ENCODE measurements at regions of chr1 and their contacts with region 1.

Region 1: DNA sequence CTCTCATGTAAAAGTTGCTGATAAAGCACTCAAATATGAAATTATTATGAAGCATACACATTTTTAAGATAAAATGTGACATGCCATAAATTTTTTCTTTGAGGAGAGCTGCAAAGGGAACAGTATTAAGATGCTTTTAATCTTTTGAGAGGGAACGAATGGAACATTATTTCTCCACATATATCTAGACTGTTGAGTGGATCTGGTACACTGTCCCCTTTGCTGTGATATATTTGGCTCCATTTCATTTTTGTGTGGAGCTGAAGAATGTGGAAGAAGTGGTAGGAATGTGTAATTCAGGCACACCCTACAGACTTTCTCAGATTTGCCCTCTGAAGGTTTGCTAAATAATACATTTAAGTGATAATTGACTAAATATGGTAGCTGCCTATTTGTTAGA is 31.7 kb downstream of the PGM1 start:
- DNase-seq: no peak
- H3K4me3 ChIP-seq: no peak overlapping the region
- H3K27ac ChIP-seq: peak overlapping the region; percentile 72
- H3K4me1 ChIP-seq: peaks cover 67% of the 10 kb centered on the region
- H3K27me3 ChIP-seq: no peaks in the 10 kb centered on the region
- CTCF ChIP-seq: peak; percentile 36

Region 2: GRCh38 chr1:63821091-63822005 is 196.4 kb after region 1 on chr1:
- intact Hi-C with region 1: no loop called
- DNase-seq: no peak
- H3K4me3 ChIP-seq: no peak overlapping the region
- H3K27ac ChIP-seq: no peak overlapping the region
- H3K4me1 ChIP-seq: peaks cover 40% of the 10 kb centered on the region
- H3K27me3 ChIP-seq: no peaks in the 10 kb centered on the region
- CTCF ChIP-seq: no peak

Region 3: GRCh38 chr1:63935143-63935542 is 310.2 kb after region 1 on chr1:
- intact Hi-C with region 1: no loop called
- DNase-seq: no peak
- H3K4me3 ChIP-seq: no peak overlapping the region
- H3K27ac ChIP-seq: peak overlapping the region; percentile 30
- H3K4me1 ChIP-seq: peaks cover 36% of the 10 kb centered on the region
- H3K27me3 ChIP-seq: no peaks in the 10 kb centered on the region
- CTCF ChIP-seq: peak; percentile 48

Region 4: GRCh38 chr1:64136752-64137411 is 512.0 kb after region 1 on chr1:
- intact Hi-C with region 1: loop called (anchors 10 kb)
- DNase-seq: peak; percentile 64
- H3K4me3 ChIP-seq: no peak overlapping the region
- H3K27ac ChIP-seq: no peak overlapping the region
- H3K4me1 ChIP-seq: no peaks in the 10 kb centered on the region
- H3K27me3 ChIP-seq: no peaks in the 10 kb centered on the region
- CTCF ChIP-seq: peak; percentile 92

Region 5: GRCh38 chr1:64242895-64243756 is 618.2 kb after region 1 on chr1:
- intact Hi-C with region 1: loop called (anchors 5 kb)
- DNase-seq: no peak
- H3K4me3 ChIP-seq: no peak overlapping the region
- H3K27ac ChIP-seq: no peak overlapping the region
- H3K4me1 ChIP-seq: peaks cover 19% of the 10 kb centered on the region
- H3K27me3 ChIP-seq: peaks cover 5% of the 10 kb centered on the region
- CTCF ChIP-seq: peak; percentile 54